CD4-positive, alpha-beta T cell (primary cell): ENCODE measurements at regions of chr10 and their contacts with region 1.

Region 1: DNA sequence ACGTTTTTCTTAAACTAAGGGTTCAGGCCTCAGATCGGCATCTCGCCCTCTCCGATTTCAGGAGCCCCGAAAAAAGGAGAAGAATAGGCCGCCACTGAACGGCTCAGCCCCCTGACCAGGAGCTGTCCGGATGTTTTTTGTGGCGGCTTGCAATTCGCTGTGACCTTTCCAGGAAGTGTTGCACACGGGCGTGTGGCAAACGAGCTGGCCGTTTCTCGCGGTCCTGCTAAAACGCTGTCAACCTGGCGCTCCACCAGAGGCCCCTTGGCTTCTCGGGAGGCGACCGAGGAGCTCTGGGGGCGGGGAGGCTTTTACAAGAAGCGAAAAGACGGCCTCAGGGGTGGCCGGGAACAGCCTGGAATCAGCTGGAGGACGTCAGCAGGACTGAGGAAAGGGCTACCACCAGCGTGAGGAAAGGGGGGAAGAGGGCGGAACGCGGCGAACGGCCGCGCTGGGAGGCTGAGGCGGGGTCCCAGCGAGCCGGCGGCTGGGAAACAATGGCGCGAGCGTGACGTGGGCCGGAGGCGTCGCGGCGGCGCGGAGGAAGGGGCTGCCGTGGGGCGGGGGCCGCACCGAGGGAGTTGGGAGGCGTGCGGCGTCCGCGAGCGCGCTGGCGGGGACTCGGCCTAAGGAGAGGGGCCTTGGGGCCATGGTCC is 493 bp downstream of the NT5C2 start:
- DNase-seq: peak; percentile 24 to 78 (median 40)
- ATAC-seq: peak; percentile 68
- H3K4me3 ChIP-seq: peak overlapping the region; percentile 79
- H3K4me3 Mint-ChIP-seq: peak overlapping the region; percentile 99
- H3K27ac ChIP-seq: peak overlapping the region; percentile 75 to 78
- H3K27ac Mint-ChIP-seq: peak overlapping the region; percentile 86
- H3K4me1 ChIP-seq: peaks cover 20% of the 10 kb centered on the region
- H3K4me1 Mint-ChIP-seq: peaks cover 49% of the 10 kb centered on the region
- H3K27me3 ChIP-seq: no peaks in the 10 kb centered on the region
- H3K27me3 Mint-ChIP-seq: no peaks in the 10 kb centered on the region
- CTCF ChIP-seq: no peak

Region 2: GRCh38 chr10:102859911-102860310 is 332.7 kb before region 1 on chr10:
- CTCF ChIA-PET with region 1: no interaction called
- POLR2A ChIA-PET with region 1: interaction called, 4 read pairs
- intact Hi-C with region 1: loop called in 1 of 2 experiments (anchors 5 kb)
- DNase-seq: no peak
- ATAC-seq: no peak
- H3K4me3 ChIP-seq: no peak overlapping the region
- H3K4me3 Mint-ChIP-seq: no peak overlapping the region
- H3K27ac ChIP-seq: no peak overlapping the region
- H3K27ac Mint-ChIP-seq: no peak overlapping the region
- H3K4me1 ChIP-seq: peaks cover 4% of the 10 kb centered on the region
- H3K4me1 Mint-ChIP-seq: peaks cover 7% of the 10 kb centered on the region
- H3K27me3 ChIP-seq: no peaks in the 10 kb centered on the region
- H3K27me3 Mint-ChIP-seq: no peaks in the 10 kb centered on the region
- CTCF ChIP-seq: no peak

Region 3: DNA sequence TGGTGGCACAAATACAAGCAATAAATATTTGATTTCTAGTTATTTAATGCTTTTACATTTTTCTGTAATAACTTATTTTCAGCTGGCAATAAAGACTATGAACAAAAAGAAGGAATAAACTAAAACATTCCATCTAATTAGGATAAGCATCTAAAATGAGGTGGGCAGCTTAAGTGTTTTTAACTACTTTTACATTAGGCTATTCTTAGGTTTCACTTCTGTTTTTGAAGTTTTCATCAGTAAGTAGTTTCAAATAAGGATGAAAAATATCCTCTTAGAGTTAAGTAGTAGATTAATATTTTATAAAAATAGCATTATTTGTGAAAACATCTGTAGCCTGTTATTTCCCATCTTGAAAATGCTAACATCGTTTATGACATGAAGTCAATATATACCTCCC is 15.5 kb before region 1 on chr10:
- CTCF ChIA-PET with region 1: no interaction called
- POLR2A ChIA-PET with region 1: interaction called, 10 read pairs
- intact Hi-C with region 1: no loop called
- DNase-seq: no peak
- ATAC-seq: no peak
- H3K4me3 ChIP-seq: no peak overlapping the region
- H3K4me3 Mint-ChIP-seq: no peak overlapping the region
- H3K27ac ChIP-seq: no peak overlapping the region
- H3K27ac Mint-ChIP-seq: no peak overlapping the region
- H3K4me1 ChIP-seq: peaks cover 3% of the 10 kb centered on the region
- H3K4me1 Mint-ChIP-seq: peaks cover 16% of the 10 kb centered on the region
- H3K27me3 ChIP-seq: no peaks in the 10 kb centered on the region
- H3K27me3 Mint-ChIP-seq: no peaks in the 10 kb centered on the region
- CTCF ChIP-seq: no peak

Region 4: DNA sequence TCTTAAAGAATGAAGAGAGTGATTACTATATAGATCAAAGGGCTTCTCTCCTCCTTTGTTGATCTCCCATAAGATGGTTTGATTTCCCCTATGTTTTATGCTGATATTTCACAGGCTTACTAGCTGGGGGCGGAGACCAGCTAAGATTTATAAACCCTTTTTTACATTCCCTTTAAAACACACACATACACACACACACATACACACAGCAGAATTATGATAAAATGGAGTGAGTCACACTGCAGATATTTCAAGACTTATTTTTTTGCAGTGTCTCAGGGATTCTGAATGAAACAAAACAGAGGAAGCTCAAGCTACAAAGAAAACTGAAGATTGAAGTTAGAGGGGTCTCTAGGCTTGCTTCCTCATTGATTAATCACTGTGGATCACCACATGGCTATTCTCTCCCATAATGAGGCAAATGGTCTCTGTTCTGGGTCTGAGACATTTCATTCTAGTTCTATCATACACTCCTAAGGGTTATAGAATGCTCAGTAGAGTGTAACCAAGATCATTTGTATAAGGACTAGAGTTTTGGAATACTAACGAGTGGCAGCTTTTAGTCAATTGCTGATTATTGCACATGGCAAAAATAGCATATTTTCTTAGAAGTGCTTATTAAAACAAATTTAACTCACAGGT is 102.9 kb after region 1 on chr10:
- CTCF ChIA-PET with region 1: no interaction called
- POLR2A ChIA-PET with region 1: no interaction called
- intact Hi-C with region 1: no loop called
- DNase-seq: no peak
- ATAC-seq: no peak
- H3K4me3 ChIP-seq: no peak overlapping the region
- H3K4me3 Mint-ChIP-seq: no peak overlapping the region
- H3K27ac ChIP-seq: no peak overlapping the region
- H3K27ac Mint-ChIP-seq: no peak overlapping the region
- H3K4me1 ChIP-seq: no peaks in the 10 kb centered on the region
- H3K4me1 Mint-ChIP-seq: no peaks in the 10 kb centered on the region
- H3K27me3 ChIP-seq: peaks cover 3 to 4% of the 10 kb centered on the region in 2 experiments
- H3K27me3 Mint-ChIP-seq: peaks cover 8% of the 10 kb centered on the region
- CTCF ChIP-seq: no peak